GM12878 (cell line): ENCODE measurements at regions of chr6 and their contacts with region 1.

Region 1: GRCh38 chr6:111709615-111710398 is 104.1 kb upstream of the TRAF3IP2 start:
- DNase-seq: peak; percentile 33
- ATAC-seq: peak; percentile 97
- H3K4me3 ChIP-seq: no peak overlapping the region
- H3K27ac ChIP-seq: peak overlapping the region; percentile 13; the same call in 1 of the 2 replicates
- H3K4me1 ChIP-seq: peaks cover 5% of the 10 kb centered on the region; the same call in 1 of the 2 replicates
- H3K27me3 ChIP-seq: no peaks in the 10 kb centered on the region
- CTCF ChIP-seq: peak; percentile 45 to 76 (median 62); a peak in 4 of 6 replicates
- EP300 ChIP-seq: no peak
- POLR2A ChIP-seq: no peak
- RAD21 ChIP-seq: peak; percentile 91

Region 2: DNA sequence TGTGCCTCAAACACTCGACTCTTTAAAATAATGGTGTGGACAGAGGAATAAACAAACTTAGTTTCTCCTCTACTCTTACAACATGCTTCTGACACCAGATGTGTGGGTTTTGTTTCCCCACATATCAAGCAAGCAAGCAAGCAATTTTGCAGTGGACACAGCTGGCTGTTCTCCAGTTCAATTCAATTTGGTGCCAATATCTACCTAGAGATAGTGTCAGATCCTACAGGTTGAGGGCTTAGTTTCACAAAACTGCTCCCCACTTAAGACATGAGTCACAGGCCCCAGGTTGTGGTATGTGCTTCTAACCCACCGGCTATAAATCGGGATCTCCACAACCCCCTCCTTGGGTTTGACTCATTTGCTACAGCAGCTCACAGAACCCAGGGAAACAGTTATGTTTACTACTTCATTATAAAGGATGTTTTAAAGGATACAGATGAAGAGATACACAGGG is 27.3 kb after region 1 on chr6:
- CTCF ChIA-PET with region 1: interaction called, 17 read pairs
- POLR2A ChIA-PET with region 1: no interaction called
- RAD21 ChIA-PET with region 1: interaction called, 8 read pairs
- SMC1A ChIA-PET with region 1: interaction called, 11 read pairs
- in situ Hi-C with region 1: no loop called
- intact Hi-C with region 1: no loop called
- DNase-seq: no peak
- ATAC-seq: no peak
- H3K4me3 ChIP-seq: no peak overlapping the region
- H3K27ac ChIP-seq: 0 out of 2 replicates have a peak overlapping the region, but pooled peaks have one; percentile 6
- H3K4me1 ChIP-seq: peaks cover 80% of the 10 kb centered on the region
- H3K27me3 ChIP-seq: no peaks in the 10 kb centered on the region
- CTCF ChIP-seq: no peak
- EP300 ChIP-seq: no peak
- POLR2A ChIP-seq: no peak
- RAD21 ChIP-seq: no peak

Region 3: DNA sequence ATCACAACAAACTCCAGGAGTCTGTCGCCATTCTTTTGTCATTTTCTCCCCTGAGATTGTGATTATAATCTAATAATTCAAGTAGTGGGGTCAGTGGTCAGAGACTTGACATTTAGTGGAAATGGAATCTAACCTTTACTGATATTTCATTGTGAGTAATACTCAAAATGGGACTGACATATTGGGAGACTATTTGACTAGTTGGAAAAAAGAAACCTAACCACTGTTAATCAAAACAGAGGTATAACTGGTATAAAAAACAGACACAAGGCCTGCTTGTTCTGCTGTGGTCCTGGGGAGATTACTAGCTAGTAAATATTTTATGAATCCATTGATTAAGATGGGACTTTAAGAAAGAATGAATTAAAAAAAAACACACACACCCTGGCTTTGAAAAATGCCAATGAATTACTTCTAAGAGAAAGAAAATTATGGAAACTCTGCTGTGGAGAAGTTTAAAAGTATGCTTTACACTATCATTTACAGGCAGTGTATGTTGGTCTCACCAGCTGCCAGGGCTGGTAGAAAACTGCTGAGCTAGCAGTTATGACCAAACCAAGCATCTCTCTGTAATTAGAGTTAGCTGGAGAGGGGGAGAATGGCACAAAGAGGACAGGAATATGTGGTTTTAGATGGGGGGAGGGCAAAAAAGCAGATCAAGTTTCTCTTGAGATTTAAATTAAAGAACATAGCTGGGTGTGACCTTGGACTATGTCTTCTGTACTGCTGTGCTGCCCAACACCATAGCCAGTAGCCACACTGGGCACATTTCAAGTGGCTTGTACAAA is 59.8 kb after region 1 on chr6:
- CTCF ChIA-PET with region 1: interaction called, 9 read pairs
- POLR2A ChIA-PET with region 1: no interaction called
- RAD21 ChIA-PET with region 1: interaction called, 46 read pairs
- SMC1A ChIA-PET with region 1: interaction called, 28 read pairs
- in situ Hi-C with region 1: no loop called
- intact Hi-C with region 1: no loop called
- DNase-seq: no peak
- ATAC-seq: no peak
- H3K4me3 ChIP-seq: no peak overlapping the region
- H3K27ac ChIP-seq: peak overlapping the region; percentile 93
- H3K4me1 ChIP-seq: peaks cover 57% of the 10 kb centered on the region
- H3K27me3 ChIP-seq: no peaks in the 10 kb centered on the region
- CTCF ChIP-seq: no peak
- EP300 ChIP-seq: no peak
- POLR2A ChIP-seq: no peak
- RAD21 ChIP-seq: no peak

Region 4: GRCh38 chr6:111841822-111842221 is 132.0 kb after region 1 on chr6:
- CTCF ChIA-PET with region 1: interaction called, 6 read pairs
- POLR2A ChIA-PET with region 1: no interaction called
- RAD21 ChIA-PET with region 1: interaction called, 7 read pairs
- SMC1A ChIA-PET with region 1: interaction called, 10 read pairs
- in situ Hi-C with region 1: no loop called
- intact Hi-C with region 1: no loop called
- DNase-seq: peak; percentile 60
- ATAC-seq: no peak
- H3K4me3 ChIP-seq: no peak overlapping the region; the same call in 1 of the 2 replicates
- H3K27ac ChIP-seq: peak overlapping the region; percentile 72
- H3K4me1 ChIP-seq: peaks cover 82% of the 10 kb centered on the region
- H3K27me3 ChIP-seq: no peaks in the 10 kb centered on the region
- CTCF ChIP-seq: no peak
- EP300 ChIP-seq: peak; percentile 36 to 52; a peak in 2 of 4 replicates
- POLR2A ChIP-seq: no peak
- RAD21 ChIP-seq: no peak

Region 5: GRCh38 chr6:112010328-112010727 is 300.5 kb after region 1 on chr6:
- CTCF ChIA-PET with region 1: interaction called, 10 read pairs
- POLR2A ChIA-PET with region 1: no interaction called
- RAD21 ChIA-PET with region 1: interaction called, 3 read pairs
- SMC1A ChIA-PET with region 1: interaction called, 8 read pairs
- in situ Hi-C with region 1: no loop called
- intact Hi-C with region 1: no loop called
- DNase-seq: no peak
- ATAC-seq: peak; percentile 32; the same call in 1 of the 3 replicates
- H3K4me3 ChIP-seq: no peak overlapping the region
- H3K27ac ChIP-seq: no peak overlapping the region
- H3K4me1 ChIP-seq: no peaks in the 10 kb centered on the region
- H3K27me3 ChIP-seq: no peaks in the 10 kb centered on the region
- CTCF ChIP-seq: peak; percentile 7 to 25 (median 23); a peak in 4 of 6 replicates
- EP300 ChIP-seq: no peak
- POLR2A ChIP-seq: no peak
- RAD21 ChIP-seq: peak; percentile 64; the same call in 1 of the 2 replicates

Region 6: GRCh38 chr6:112173221-112173804 is 463.5 kb after region 1 on chr6:
- CTCF ChIA-PET with region 1: no interaction called
- POLR2A ChIA-PET with region 1: no interaction called
- RAD21 ChIA-PET with region 1: no interaction called
- SMC1A ChIA-PET with region 1: no interaction called
- in situ Hi-C with region 1: no loop called
- intact Hi-C with region 1: loop called (anchors 5 kb)
- DNase-seq: no peak
- ATAC-seq: no peak
- H3K4me3 ChIP-seq: no peak overlapping the region
- H3K27ac ChIP-seq: no peak overlapping the region
- H3K4me1 ChIP-seq: no peaks in the 10 kb centered on the region
- H3K27me3 ChIP-seq: peaks cover 0 to 3% of the 10 kb centered on the region in 2 experiments; a peak in 3 of 4 replicates
- CTCF ChIP-seq: no peak
- EP300 ChIP-seq: no peak
- POLR2A ChIP-seq: no peak
- RAD21 ChIP-seq: no peak